Common myeloid progenitor, CD34-positive (primary cell): ENCODE measurements at regions of chr2 and their contacts with region 1.

Region 1: DNA sequence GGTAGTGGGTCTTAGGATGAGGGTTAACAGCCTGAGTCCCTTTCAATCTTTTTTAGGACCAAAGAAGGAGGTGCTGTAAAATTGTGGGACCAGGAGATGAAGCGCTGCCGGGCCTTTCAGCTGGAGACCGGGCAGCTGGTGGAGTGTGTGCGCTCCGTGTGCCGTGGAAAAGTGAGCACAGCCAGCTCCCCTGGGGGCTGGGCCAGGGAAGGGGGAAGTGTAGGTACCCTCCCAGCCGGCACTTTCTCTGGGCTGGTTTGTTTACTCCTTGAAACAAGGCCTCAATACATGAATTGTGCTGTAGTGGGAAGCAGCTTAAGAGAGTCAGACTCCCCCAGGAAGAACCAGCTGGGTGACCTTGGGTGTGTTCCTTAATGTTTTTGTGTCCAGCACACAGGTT is 90.1 kb downstream of the RTN4 start:
- DNase-seq: no peak
- H3K4me3 ChIP-seq: no peak overlapping the region
- H3K27ac ChIP-seq: no peak overlapping the region
- H3K4me1 ChIP-seq: peaks cover 11 to 56% (median 35%) of the 10 kb centered on the region in 4 experiments
- H3K27me3 ChIP-seq: no peaks in the 10 kb centered on the region

Region 2: GRCh38 chr2:54975598-54976492 is 15.7 kb after region 1 on chr2:
- CTCF ChIA-PET with region 1: interaction called, 13 read pairs
- POLR2A ChIA-PET with region 1: interaction called, 3 read pairs
- DNase-seq: no peak
- H3K4me3 ChIP-seq: no peak overlapping the region
- H3K27ac ChIP-seq: no peak overlapping the region
- H3K4me1 ChIP-seq: peaks cover 8 to 35% (median 22%) of the 10 kb centered on the region in 4 experiments
- H3K27me3 ChIP-seq: no peaks in the 10 kb centered on the region